CD14-positive monocyte (primary cell): ENCODE measurements at regions of chr17 and their contacts with region 1.

Region 1: DNA sequence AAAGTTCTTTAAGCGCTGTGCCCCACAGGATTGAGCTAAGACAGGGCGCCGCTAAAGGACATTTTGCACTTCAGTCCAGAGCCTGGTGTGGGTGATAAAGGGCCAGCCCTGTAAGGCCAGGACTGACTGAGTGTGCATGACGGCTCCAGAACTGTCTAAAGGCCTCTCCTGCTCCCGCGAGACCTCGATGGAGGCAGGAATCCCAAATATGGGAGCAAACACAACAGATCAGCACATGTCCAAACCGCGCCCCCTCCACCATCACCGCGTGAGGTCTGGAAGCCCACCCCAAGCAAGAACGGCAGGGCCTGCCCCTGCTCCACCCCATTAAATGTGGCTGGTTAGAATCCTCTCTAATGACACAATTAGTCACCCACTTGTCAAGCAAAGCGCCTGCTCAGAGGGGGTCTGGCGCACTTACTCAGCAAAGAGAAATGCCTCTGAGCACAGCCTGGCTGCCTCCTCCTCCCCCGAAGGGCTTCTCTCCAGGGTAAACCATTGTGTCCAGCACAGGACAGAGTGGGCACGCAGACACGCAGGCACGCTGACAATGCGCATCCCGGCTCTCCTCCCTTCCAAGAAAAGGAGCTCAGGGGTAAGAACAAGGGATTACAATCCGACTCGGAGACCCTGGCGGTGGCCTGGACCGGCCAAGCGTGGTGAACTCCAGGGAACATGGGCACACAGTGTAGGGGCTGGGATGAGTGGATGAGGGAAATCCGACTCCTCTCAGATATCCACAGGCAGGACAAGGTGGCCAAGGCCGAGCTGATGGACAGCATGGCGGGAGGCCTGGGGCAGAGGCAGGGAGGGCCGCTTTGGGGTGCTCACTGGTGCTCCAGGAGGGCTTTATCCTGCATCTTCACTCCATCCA is 1.5 kb downstream of the MXRA7 start:
- DNase-seq: no peak
- H3K4me3 ChIP-seq: no peak overlapping the region
- H3K4me3 Mint-ChIP-seq: peak overlapping the region; percentile 67 to 78
- H3K27ac ChIP-seq: no peak overlapping the region
- H3K27ac Mint-ChIP-seq: peak overlapping the region in 2 of 7 donors; percentile 6 to 50
- H3K4me1 ChIP-seq: peaks cover 13 to 14% of the 10 kb centered on the region in 2 donors
- H3K4me1 Mint-ChIP-seq: peaks cover 14% of the 10 kb centered on the region
- H3K27me3 ChIP-seq: peaks cover 8 to 17% of the 10 kb centered on the region in 2 donors
- H3K27me3 Mint-ChIP-seq: peaks cover 25 to 33% (median 26%) of the 10 kb centered on the region in 3 donors
- CTCF ChIP-seq: no peak

Region 2: DNA sequence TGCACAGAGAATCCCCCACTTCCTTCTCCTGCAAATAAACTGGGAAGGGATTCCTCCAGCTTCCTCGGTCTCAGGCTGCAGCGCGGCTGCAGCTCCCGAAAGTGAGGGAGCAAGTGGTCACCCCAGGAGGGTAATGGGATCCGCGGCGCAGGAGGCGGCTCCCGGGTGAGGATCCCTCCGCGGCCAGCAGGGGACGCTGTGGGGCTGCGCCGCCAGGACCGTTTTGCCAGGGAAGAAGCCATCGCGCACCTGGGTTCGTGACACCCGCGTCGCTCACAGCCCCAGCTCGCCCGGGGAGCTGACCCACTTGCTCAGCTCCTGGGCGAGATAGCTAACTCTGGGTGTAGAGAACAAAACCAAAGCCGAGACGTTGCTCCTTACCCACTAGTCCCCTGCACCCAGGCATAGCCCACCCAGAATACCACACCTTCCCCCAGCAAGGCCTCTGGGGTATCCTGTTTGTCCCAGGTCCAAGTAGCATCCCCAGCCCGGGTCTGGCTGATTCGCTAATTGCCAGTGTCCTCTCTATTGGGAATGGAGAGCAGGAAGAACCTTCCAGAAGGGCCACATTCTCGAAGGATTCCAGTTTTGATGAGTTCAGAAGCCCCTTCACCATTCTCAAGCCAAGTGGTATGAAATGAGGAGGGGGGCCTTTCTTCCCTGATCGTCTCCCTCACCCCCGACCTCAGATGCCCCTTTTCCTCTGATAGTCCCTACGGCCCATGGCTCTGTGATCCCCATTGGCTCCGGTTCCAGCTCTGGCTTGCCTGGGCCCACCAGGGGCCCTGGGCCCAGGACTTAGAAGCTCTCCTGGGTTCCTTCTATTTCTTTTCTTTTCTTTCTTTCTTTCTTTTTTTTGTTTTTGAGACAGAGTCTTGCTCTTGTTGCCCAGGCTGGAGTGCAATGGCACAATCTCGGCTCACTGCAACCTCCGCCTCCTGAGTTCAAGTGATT is 186.0 kb before region 1 on chr17:
- intact Hi-C with region 1: loop called in 1 of 2 experiments (anchors 10 kb)
- DNase-seq: peak; percentile 66 to 79 (median 67)
- H3K4me3 ChIP-seq: no peak overlapping the region
- H3K4me3 Mint-ChIP-seq: peak overlapping the region in 1 of 2 donors; percentile 71
- H3K27ac ChIP-seq: no peak overlapping the region
- H3K27ac Mint-ChIP-seq: peak overlapping the region in 2 of 7 donors; percentile 8 to 61
- H3K4me1 ChIP-seq: peaks cover 4 to 13% of the 10 kb centered on the region in 2 donors
- H3K4me1 Mint-ChIP-seq: peaks cover 11% of the 10 kb centered on the region
- H3K27me3 ChIP-seq: peaks cover 0 to 19% of the 10 kb centered on the region in 2 donors
- H3K27me3 Mint-ChIP-seq: peaks cover 21 to 38% (median 33%) of the 10 kb centered on the region in 3 donors
- CTCF ChIP-seq: peak; percentile 100